HEK293 (cell line): ENCODE measurements at regions of chr18 and their contacts with region 1.

Region 1: DNA sequence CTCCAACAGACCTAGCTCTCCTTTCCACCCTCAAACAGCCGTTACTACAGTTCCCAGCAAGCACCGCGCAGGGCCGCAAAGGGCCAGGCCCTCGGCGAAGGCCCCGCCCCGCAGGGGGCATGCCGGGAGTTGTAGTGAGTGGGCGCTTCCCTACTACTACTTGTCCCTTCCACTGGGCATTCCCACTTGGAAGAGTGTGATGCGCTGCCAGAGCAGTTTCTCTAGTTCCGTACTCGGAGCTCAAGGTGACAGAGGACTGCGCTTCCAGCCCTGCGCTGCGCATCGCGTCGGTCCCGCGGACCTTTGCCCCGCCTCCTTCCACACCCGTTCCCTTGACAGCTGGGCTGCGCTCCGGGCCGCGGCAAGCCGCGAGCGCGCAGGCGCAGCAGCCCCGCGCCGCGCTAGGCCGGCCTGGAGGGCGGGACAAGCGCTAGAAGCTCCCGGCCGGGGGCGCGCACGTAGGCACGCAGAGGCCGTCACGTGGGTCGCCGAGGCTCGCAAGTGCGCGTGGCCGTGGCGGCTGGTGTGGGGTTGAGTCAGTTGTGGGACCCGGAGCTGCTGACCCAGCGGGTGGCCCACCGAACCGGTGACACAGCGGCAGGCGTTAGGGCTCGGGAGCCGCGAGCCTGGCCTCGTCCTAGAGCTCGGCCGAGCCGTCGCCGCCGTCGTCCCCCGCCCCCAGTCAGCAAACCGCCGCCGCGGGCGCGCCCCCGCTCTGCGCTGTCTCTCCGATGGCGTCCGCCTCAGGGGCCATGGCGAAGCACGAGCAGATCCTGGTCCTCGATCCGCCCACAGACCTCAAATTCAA is at the start of gene VAPA:
- H3K4me3 ChIP-seq: peak within 1 kb of the TSS; percentile 86
- H3K27ac ChIP-seq: peak within 1 kb of the TSS; percentile 96
- H3K4me1 ChIP-seq: peaks cover 17% of the 10 kb centered on the region
- CTCF ChIP-seq: peak; percentile 22; the same call in 1 of the 2 replicates

Region 2: DNA sequence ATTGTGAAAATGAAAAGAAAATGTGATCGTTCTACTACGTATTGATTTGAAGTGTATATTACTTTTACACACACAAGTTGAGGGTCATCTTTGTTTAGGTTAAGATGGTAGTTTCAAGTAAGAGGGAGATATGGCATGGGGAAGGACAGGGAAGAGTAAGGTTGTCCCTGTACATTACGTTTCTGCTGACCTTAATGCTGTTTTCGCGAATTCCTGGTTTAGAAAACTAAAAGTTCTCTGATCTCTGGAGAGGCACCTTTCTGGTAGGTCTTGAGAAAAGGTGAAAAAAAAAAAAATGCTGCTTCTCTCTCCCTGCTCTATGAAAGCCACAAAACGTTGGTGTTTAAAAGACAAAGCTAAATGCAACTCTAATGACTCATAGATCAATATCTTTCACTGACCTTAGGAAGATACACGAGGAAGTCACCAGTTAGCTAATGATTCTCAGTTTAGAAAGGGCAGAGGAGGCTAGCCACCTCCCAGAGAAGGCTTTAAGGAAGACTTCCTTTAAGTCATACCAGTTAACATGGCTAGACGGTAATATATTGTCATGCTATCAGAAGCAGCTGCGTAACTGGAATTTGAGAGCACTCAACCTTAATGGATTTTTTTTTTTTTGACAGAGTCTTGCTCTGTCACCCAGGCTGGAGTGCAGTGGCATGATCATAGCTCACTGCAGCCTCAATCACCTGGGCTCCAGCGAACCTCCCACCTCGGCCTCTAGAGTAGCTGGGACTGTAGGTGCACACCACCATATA is 14.8 kb before region 1 on chr18:
- CTCF ChIA-PET with region 1: interaction called, 3 read pairs
- POLR2A ChIA-PET with region 1: interaction called, 16 read pairs
- H3K4me3 ChIP-seq: no peak overlapping the region
- H3K27ac ChIP-seq: no peak overlapping the region
- H3K4me1 ChIP-seq: no peaks in the 10 kb centered on the region
- CTCF ChIP-seq: no peak

Region 3: GRCh38 chr18:9925369-9925768 is 11.6 kb after region 1 on chr18:
- CTCF ChIA-PET with region 1: interaction called, 3 read pairs
- POLR2A ChIA-PET with region 1: interaction called, 22 read pairs
- H3K4me3 ChIP-seq: no peak overlapping the region
- H3K27ac ChIP-seq: no peak overlapping the region
- H3K4me1 ChIP-seq: peaks cover 52% of the 10 kb centered on the region
- CTCF ChIP-seq: no peak

Region 4: DNA sequence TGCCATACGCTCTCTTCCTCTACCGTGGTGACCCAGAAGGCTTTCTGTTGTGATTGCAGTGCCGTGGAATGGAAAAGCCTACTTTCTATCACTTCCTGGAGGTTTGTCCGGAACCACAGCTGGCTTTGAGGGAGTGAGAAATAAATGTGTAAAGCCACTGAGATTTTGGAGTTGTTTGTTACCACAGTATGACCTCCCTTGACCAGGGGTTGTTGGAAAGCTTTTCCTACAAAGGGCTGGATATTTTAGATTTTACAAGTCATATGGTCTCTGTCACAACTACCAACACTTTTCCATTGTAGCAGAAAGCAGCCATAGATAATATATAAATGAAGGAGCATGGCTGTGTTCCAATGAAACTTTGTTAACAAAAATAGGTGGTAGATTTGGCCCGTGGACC is 70.3 kb after region 1 on chr18:
- CTCF ChIA-PET with region 1: no interaction called
- POLR2A ChIA-PET with region 1: no interaction called
- H3K4me3 ChIP-seq: no peak overlapping the region
- H3K27ac ChIP-seq: no peak overlapping the region
- H3K4me1 ChIP-seq: no peaks in the 10 kb centered on the region
- CTCF ChIP-seq: no peak